ENCODE measurements at regions of chr9 and their contacts with region 1.

Region 1: GRCh38 chr9:112750111-112750767 is at the start of gene SNX30:
- DNase-seq: peak; percentile 96
- ATAC-seq: peak; percentile 98
- total RNA-seq, gene SNX30: 5.0 TPM

Region 2: GRCh38 chr9:112793213-112793810 is 43.1 kb after region 1 on chr9:
- intact Hi-C with region 1: loop called (anchors 5 kb)
- DNase-seq: peak; percentile 78
- ATAC-seq: peak; percentile 60

Region 3: GRCh38 chr9:112898872-112899311 is 148.7 kb after region 1 on chr9:
- intact Hi-C with region 1: no loop called
- DNase-seq: no peak
- ATAC-seq: no peak

Measured in Right ventricle myocardium inferior (tissue), 1 donor.